ENCODE measurements at regions of chr7 and their contacts with region 1.

Region 1: GRCh38 chr7:35261476-35262285 is 7.8 kb upstream of the TBX20 start:
- DNase-seq: peak; percentile 33
- ATAC-seq: peak; percentile 23 to 33

Region 2: GRCh38 chr7:34991938-34992840 is 269.5 kb before region 1 on chr7:
- intact Hi-C with region 1: no loop called
- DNase-seq: peak; percentile 29
- ATAC-seq: peak in 1 of 2 donors; percentile 50

Region 3: DNA sequence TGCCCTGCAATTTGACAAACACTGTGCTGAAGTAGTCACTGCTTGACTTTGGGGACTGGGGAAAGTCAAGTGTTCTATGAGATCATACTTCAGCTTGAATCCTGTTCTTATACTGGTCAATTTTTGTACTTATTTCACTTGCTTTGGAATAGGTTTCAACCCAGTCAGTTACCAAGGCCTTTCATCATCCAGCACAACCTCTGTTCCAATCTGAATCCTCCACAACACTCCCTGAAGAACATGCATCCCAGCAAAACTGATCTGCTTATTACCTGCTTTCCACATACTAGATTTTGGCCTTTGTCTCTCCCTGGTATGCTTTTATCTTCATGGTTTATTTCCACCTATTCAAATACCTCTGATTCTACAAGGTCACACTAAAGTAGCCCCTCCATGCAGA is 253.9 kb before region 1 on chr7:
- intact Hi-C with region 1: no loop called
- DNase-seq: no peak
- ATAC-seq: no peak

Region 4: DNA sequence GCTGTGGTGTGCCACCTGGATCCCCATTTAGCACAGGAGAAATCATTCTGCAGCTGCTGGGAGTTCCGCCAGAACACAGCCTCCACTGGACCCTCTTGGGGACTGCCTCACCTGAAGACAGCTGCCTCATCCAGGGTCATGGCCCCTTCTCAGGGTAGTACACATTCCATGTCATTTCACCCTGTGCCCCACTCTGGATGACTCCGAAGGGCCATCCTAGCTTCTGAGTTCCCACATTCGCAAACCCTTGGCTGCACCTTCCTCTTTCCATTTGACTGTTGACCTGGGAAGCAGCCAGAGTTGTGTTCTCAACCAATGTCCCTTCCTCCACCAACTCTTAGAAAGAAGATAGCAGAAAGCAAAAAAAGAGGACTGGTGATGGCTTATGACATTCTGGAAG is 117.8 kb after region 1 on chr7:
- intact Hi-C with region 1: loop called in 1 of 2 experiments (anchors 10 kb)
- DNase-seq: peak; percentile 29
- ATAC-seq: peak in 1 of 2 donors; percentile 12

Region 5: DNA sequence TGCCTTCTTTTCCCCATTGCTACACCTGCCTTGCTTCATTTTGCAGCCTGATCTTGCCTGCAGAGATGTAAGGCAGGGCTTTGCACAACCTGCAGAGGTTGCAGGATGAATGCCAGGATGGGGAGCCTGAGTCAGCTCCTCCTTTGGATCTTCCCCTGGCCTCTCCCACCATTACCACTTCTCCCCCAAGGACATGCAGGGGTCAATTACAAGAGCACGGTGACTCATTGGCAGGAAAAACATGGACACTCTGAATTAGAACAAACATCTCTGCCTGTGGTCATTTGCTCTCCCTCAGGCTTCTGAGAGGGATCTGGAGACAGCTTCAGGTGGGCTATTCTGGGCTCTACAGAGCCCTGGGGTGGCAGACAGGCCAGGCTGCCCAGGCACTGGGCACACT is 344.1 kb after region 1 on chr7:
- intact Hi-C with region 1: no loop called
- DNase-seq: no peak
- ATAC-seq: peak in 1 of 2 donors; percentile 88